ENCODE measurements at regions of chr14 and their contacts with region 1.

Region 1: DNA sequence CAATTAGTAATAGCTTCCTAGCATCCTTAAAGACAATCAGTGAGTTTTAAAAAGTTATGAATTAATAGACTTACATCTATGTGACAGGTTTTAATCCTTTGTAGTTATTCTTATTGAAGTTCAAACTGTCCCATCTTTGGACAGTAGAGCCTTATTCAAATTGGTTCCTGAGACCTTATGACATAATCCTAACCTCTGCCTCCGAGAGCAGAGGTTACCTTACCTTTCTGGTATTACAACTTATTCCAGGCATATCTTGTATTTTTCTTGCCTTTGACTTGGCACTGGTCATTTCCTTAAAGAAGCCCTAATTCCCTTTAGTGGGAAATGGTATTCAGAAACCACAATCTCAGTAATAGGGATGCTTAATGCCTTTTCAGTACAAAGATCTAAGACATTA is 21.8 kb downstream of the BTBD7 start:
- DNase-seq: no peak
- ATAC-seq: no peak
- H3K4me3 ChIP-seq: no peak overlapping the region
- H3K4me3 Mint-ChIP-seq: no peak overlapping the region
- H3K27ac ChIP-seq: no peak overlapping the region
- H3K27ac Mint-ChIP-seq: no peak overlapping the region
- H3K4me1 ChIP-seq: no peaks in the 10 kb centered on the region
- H3K4me1 Mint-ChIP-seq: peaks cover 32 to 48% (median 42%) of the 10 kb centered on the region in 3 donors
- H3K27me3 ChIP-seq: no peaks in the 10 kb centered on the region
- H3K27me3 Mint-ChIP-seq: no peaks in the 10 kb centered on the region

Region 2: GRCh38 chr14:93269341-93270068 is 41.6 kb before region 1 on chr14:
- CTCF ChIA-PET with region 1: no interaction called
- POLR2A ChIA-PET with region 1: no interaction called
- DNase-seq: no peak
- ATAC-seq: no peak
- H3K4me3 ChIP-seq: no peak overlapping the region
- H3K4me3 Mint-ChIP-seq: no peak overlapping the region
- H3K27ac ChIP-seq: no peak overlapping the region
- H3K27ac Mint-ChIP-seq: no peak overlapping the region
- H3K4me1 ChIP-seq: no peaks in the 10 kb centered on the region
- H3K4me1 Mint-ChIP-seq: peaks cover 9 to 38% (median 26%) of the 10 kb centered on the region in 3 donors
- H3K27me3 ChIP-seq: no peaks in the 10 kb centered on the region
- H3K27me3 Mint-ChIP-seq: no peaks in the 10 kb centered on the region

Region 3: GRCh38 chr14:93676419-93676958 is 365.4 kb after region 1 on chr14:
- CTCF ChIA-PET with region 1: no interaction called
- POLR2A ChIA-PET with region 1: no interaction called
- DNase-seq: no peak
- ATAC-seq: no peak
- H3K4me3 ChIP-seq: no peak overlapping the region
- H3K4me3 Mint-ChIP-seq: no peak overlapping the region
- H3K27ac ChIP-seq: no peak overlapping the region
- H3K27ac Mint-ChIP-seq: no peak overlapping the region
- H3K4me1 ChIP-seq: no peaks in the 10 kb centered on the region
- H3K4me1 Mint-ChIP-seq: no peaks in the 10 kb centered on the region
- H3K27me3 ChIP-seq: no peaks in the 10 kb centered on the region
- H3K27me3 Mint-ChIP-seq: peaks cover 13 to 27% of the 10 kb centered on the region in 2 donors

Region 4: DNA sequence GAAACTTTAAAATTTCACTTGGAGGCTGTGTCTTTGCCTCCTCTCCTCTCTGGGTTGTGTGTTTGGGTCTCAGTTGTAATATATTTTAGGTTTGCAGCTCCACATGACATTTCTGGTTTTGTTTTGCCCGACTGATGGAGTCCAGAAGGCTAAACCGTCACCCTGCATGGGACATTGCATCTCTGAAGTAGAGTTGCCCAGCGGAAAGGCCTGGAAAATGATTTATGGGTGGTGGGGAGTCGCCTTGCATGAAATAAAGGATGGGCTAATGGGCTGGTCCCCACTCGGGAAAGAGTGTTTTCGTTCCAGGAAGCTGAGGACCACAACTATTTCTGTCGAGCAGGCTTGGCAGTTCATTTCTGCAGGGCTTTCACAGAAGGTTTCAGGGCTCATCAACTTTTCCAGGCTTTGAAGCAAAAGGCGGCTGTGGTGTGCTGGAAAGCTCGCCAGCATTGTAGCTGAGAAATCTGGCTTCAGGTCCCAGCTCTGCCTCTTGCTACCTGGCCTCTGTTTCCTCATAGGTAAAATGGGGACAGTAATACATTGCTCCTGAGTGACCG is 1533.6 kb after region 1 on chr14:
- CTCF ChIA-PET with region 1: no interaction called
- POLR2A ChIA-PET with region 1: interaction called in 1 of 2 experiments, 18 read pairs
- DNase-seq: no peak
- ATAC-seq: no peak
- H3K4me3 ChIP-seq: no peak overlapping the region
- H3K4me3 Mint-ChIP-seq: no peak overlapping the region
- H3K27ac ChIP-seq: no peak overlapping the region
- H3K27ac Mint-ChIP-seq: no peak overlapping the region
- H3K4me1 ChIP-seq: no peaks in the 10 kb centered on the region
- H3K4me1 Mint-ChIP-seq: no peaks in the 10 kb centered on the region
- H3K27me3 ChIP-seq: peaks cover 0 to 13% of the 10 kb centered on the region in 2 experiments
- H3K27me3 Mint-ChIP-seq: peaks cover 4 to 5% of the 10 kb centered on the region in 2 donors